Activated CD8-positive, alpha-beta memory T cell treated with anti-CD3 and anti-CD28 coated beads, Interleukin-2, amount 10 ng/mL, durations not matched to agents 7 days and 5 days (primary cell): ENCODE measurements at regions of chr11 and their contacts with region 1.

Region 1: DNA sequence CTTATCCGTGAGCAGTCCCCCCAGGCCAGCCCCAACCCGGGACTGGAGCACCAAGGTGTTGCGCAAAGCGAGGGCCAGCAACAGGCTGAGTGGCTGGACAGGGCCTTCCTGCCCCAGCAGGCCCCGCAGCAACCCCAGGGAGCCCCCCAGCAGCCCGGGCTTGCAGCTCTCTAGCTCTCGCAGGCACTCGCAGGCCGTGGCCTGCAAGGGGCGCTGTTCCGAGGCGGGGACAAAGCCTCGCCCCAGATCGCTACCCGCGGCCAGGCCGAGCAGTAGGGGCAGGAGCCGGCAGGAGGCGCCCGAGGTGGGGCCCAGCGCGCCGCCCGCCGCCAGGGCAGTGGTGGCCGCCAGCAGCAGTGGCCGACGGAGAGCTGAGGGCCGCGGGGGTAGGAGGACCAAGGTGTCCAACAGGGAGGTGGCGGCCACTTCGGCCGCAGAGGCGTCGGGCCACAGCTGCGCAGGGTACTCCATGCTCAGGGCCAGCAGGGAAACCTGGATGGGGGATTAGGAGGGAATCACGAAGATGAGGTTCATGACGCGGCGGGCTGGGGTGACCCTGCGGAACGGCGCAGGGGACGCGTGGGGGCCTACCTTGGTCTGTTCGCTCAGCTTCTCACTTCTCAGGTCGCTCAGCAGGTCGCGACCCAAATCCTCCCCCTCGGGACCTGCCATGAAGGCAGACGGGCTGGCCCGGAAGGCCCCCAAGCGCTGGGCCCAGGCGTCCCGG is 762 bp downstream of the AP5B1 start:
- DNase-seq: peak; percentile 91
- ATAC-seq: peak; percentile 81
- H3K4me3 Mint-ChIP-seq: peak overlapping the region; percentile 87
- H3K27ac Mint-ChIP-seq: peak overlapping the region; percentile 82
- H3K4me1 Mint-ChIP-seq: peaks cover 16% of the 10 kb centered on the region
- H3K27me3 Mint-ChIP-seq: peaks cover 14% of the 10 kb centered on the region

Region 2: GRCh38 chr11:65736810-65737209 is 43.2 kb before region 1 on chr11:
- CTCF ChIA-PET with region 1: interaction called, 12 read pairs
- DNase-seq: no peak
- ATAC-seq: no peak
- H3K4me3 Mint-ChIP-seq: no peak overlapping the region
- H3K27ac Mint-ChIP-seq: no peak overlapping the region
- H3K4me1 Mint-ChIP-seq: no peaks in the 10 kb centered on the region
- H3K27me3 Mint-ChIP-seq: peaks cover 47% of the 10 kb centered on the region

Region 3: DNA sequence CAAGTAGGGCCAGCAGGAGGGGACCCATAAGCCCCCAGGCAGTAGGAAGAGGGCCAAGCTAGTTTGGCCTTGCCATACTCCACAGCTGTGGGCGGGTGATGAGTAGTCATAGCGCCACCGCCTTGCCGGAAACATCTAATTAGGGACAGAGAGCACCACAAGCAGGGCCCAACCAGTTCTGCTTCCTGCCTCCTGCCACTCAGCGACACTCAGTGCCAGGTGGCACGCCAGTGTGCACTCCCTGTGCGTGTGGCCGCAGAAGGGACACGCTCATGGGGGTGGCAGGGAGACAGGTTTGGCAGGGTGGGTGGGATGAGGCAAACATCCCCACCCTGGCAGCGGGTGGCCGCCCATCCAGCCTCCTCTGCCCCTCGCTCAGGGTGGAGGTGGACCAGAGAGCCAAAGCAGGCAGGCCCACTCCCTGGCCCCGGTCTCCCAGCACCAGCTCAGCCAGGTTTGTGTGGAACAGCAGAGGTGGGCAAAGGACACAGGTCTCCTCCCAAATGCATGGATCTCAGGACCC is 11.7 kb after region 1 on chr11:
- CTCF ChIA-PET with region 1: interaction called, 67 read pairs
- DNase-seq: peak; percentile 85
- ATAC-seq: peak; percentile 95
- H3K4me3 Mint-ChIP-seq: no peak overlapping the region
- H3K27ac Mint-ChIP-seq: peak overlapping the region; percentile 73
- H3K4me1 Mint-ChIP-seq: peaks cover 22% of the 10 kb centered on the region
- H3K27me3 Mint-ChIP-seq: peaks cover 34% of the 10 kb centered on the region

Region 4: DNA sequence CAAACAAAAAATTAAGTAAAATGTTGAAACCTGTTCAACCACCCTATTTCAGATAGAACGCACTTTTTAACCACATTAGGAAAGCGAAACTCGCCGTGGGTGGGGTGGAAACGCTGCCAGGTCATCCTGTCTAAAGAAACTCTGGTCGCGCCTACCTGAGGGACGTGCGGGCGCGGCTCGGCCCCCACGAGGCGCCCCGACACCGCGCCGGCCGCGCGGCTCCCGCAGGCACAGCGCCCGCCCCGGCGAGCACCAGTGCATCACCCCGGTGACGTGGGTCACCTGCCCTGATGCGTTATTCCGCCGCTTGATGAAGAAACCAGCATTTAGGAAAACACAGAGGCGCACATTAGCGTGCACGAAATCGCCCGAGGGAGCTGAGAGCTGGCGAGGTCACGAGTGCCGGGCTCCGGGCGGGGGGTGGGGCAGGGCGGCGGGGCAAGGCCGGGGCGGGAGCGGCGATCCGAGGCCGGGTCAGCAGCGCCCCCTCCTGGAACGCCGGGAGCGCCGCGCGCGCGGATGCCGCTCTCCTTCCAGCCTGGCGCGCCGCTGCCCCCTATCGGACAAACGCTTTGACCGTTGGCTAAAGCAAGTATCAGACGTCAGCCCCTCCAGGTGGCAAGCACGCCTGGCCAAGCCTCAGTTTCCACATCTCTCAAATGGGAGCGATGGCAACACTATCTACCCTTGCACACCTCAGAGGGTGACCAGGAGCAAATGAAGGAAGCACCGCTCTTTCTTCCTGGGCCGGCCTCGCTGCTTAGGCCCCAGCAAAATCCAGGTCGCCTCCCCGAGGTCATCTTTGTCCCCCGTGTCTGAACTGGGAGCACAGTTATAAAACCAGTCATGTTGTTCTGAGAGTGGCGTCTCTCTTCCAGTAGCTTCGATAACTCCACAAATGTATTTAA is 38.1 kb after region 1 on chr11:
- CTCF ChIA-PET with region 1: interaction called, 128 read pairs
- DNase-seq: peak; percentile 95
- ATAC-seq: peak; percentile 91
- H3K4me3 Mint-ChIP-seq: peak overlapping the region; percentile 75
- H3K27ac Mint-ChIP-seq: peak overlapping the region; percentile 70
- H3K4me1 Mint-ChIP-seq: peaks cover 18% of the 10 kb centered on the region
- H3K27me3 Mint-ChIP-seq: peaks cover 4% of the 10 kb centered on the region

Region 5: DNA sequence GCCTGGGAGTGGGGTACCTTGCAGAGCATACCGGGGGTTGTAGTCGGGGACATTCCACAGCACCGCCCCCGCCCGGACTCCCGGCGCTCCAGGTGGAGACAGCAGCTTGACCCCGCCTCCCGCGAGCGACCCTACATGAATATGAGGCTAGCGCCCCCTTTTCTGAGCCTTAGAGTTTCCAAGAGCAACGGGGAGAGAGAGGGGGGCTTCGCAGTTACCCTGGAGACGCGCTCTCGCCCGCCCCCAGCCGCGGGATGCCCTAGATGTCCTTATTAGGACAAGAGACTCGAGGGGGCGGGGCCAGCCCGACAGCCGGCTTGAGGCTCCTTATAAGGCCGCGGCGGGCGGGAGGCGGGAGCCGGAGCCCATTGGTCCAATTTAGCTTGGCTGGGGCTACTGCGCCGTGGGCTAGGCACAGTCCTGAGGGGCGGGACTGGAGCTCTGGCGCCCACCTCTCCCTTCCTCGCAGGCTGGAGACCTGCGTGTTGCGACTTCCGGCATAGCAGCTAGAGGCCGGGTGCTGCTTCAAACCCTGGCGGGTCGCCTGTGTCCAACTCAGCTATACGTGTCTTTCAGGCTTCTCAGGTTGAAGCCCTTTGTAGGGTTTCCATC is 79.3 kb after region 1 on chr11:
- CTCF ChIA-PET with region 1: interaction called, 20 read pairs
- DNase-seq: peak; percentile 100
- ATAC-seq: peak; percentile 71
- H3K4me3 Mint-ChIP-seq: peak overlapping the region; percentile 91
- H3K27ac Mint-ChIP-seq: peak overlapping the region; percentile 99
- H3K4me1 Mint-ChIP-seq: peaks cover 50% of the 10 kb centered on the region
- H3K27me3 Mint-ChIP-seq: no peaks in the 10 kb centered on the region